ENCODE measurements at regions of chr2 and their contacts with region 1.

Region 1: DNA sequence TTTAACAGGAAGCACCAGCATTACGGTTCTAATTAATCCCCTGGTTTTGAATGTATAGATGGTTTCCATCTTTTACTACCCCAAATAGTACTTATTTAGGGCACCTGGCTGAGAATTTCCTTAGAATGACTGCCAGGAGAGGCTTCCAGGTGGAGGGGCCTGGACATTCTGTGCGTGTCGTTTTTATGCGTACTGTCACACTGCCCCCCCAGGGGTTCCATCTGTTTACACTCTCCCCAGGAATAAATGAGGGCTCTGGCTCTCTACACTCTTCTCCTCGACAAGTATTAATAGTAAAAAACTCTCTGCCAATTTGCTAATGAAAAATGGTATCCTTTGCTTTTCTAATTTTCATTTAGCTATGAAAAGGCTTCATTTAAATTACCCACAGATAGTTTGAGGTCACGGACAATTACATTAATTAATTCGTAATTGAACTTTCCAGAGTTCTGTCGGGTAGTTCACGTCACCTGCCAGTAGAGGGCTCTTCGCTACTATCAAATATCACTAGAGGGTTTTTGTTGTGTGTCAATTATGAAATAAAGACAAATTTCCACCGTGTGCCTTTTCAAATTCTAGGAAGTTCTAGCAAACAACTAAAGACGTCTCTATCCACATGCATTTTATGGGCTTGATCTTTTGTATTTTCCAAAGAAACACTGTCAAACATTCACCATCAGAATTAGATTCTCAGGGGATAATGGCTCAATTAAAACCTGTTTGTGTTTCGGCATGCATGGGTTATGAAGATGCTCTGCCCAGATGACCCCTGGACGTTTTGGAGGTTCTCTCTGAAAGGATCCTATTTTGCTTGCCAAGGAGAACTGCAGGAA is 88.8 kb upstream of the ASB18 start:
- DNase-seq: no peak
- H3K4me3 ChIP-seq: no peak overlapping the region
- H3K27ac ChIP-seq: no peak overlapping the region
- H3K4me1 ChIP-seq: no peaks in the 10 kb centered on the region
- H3K27me3 ChIP-seq: no peaks in the 10 kb centered on the region
- CTCF ChIP-seq: peak; percentile 75 to 88 (median 82)
- POLR2A ChIP-seq: no peak

Region 2: GRCh38 chr2:237060534-237061312 is 707.7 kb after region 1 on chr2:
- intact Hi-C with region 1: loop called (anchors 10 kb)
- DNase-seq: peak in 1 of 2 donors; percentile 45
- H3K4me3 ChIP-seq: peak overlapping the region in 2 of 3 donors; percentile 1 to 9
- H3K27ac ChIP-seq: no peak overlapping the region
- H3K4me1 ChIP-seq: peaks cover 0 to 9% of the 10 kb centered on the region in 2 donors
- H3K27me3 ChIP-seq: no peaks in the 10 kb centered on the region
- CTCF ChIP-seq: peak; percentile 43 to 77 (median 75)
- POLR2A ChIP-seq: no peak